ENCODE measurements at regions of chr12 and their contacts with region 1.

Region 1: DNA sequence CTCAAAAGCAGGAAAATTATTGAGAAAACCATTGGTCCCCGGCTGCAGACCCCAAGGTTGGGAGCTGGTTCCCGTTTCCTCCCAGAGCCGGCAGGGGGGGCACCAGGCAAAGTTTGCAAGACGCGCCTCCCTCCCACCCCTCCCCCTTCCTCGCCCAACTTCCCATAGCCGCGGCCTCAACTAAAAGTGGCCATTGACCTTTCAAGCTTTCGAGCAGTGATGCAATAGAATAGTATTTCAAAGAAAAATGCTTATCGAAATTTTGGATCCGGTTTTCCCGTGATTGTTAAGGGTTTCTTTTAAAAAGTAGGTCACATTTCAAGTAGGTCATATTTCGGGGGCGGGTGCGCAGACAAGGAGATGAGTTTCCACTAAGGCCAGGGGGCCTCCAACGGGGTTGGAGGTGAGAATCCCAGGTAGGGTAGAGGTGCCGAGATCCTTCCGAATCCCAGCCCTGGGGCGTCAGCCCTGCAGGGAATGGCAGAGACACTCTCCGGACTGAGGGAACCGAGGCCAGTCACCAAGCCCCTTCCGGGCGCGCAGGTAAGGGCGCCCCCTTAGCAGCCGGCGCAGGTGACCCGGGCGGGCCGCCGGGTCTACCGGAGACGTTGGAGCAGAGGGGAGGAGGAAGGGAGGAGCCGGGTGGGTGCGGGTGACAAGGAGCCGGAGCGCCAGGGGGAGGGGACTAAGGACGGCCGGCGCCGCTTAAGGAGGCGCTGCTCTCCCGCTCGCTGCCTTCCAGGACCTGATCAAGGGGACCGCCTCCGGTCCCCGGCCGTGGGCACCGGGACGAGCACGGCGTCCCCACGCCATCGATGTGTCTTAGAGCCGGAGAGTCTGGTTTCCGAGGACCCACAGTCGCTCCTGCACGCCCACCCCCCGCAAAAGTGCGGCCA is 2.6 kb upstream of the SOCS2 start:
- DNase-seq: peak; percentile 89 to 96
- ATAC-seq: peak; percentile 91
- H3K4me3 ChIP-seq: peak overlapping the region; percentile 62 to 74
- H3K27ac ChIP-seq: peak overlapping the region in 1 of 2 donors; percentile 71
- H3K4me1 ChIP-seq: no peaks in the 10 kb centered on the region
- H3K27me3 ChIP-seq: no peaks in the 10 kb centered on the region

Region 2: GRCh38 chr12:93484315-93484981 is 85.5 kb before region 1 on chr12:
- intact Hi-C with region 1: no loop called
- DNase-seq: no peak
- ATAC-seq: no peak
- H3K4me3 ChIP-seq: no peak overlapping the region
- H3K27ac ChIP-seq: no peak overlapping the region
- H3K4me1 ChIP-seq: peaks cover 0 to 1% of the 10 kb centered on the region in 2 donors
- H3K27me3 ChIP-seq: no peaks in the 10 kb centered on the region

Region 3: DNA sequence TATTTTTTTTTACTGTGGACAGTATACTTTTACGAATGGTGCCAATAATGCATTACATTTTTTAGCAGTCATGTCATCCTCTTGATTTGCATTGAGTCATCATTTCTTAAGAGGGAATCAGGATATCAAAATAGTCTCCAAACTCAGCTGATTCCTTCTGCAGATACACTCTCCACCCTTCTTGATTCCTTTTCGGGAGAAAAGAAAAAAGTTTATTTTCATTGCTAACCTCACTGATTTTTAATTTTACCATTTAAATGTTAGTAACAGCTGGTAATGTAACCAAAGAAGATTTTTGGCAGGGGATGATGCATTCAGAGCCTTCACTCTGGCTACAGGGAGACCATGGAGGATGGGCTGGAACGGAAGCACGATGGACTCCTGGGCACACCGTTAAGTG is 55.1 kb before region 1 on chr12:
- intact Hi-C with region 1: no loop called
- DNase-seq: no peak
- ATAC-seq: no peak
- H3K4me3 ChIP-seq: no peak overlapping the region
- H3K27ac ChIP-seq: no peak overlapping the region
- H3K4me1 ChIP-seq: no peaks in the 10 kb centered on the region
- H3K27me3 ChIP-seq: no peaks in the 10 kb centered on the region

Region 4: GRCh38 chr12:93580682-93581081 is 10.8 kb after region 1 on chr12:
- intact Hi-C with region 1: no loop called
- DNase-seq: no peak
- ATAC-seq: no peak
- H3K4me3 ChIP-seq: no peak overlapping the region
- H3K27ac ChIP-seq: no peak overlapping the region
- H3K4me1 ChIP-seq: no peaks in the 10 kb centered on the region
- H3K27me3 ChIP-seq: no peaks in the 10 kb centered on the region

Region 5: GRCh38 chr12:93591137-93591868 is 21.4 kb after region 1 on chr12:
- intact Hi-C with region 1: loop called in 1 of 2 experiments (anchors 2 kb)
- DNase-seq: peak; percentile 88 to 90
- ATAC-seq: peak; percentile 94
- H3K4me3 ChIP-seq: peak overlapping the region; percentile 54 to 88
- H3K27ac ChIP-seq: peak overlapping the region in 1 of 2 donors; percentile 79
- H3K4me1 ChIP-seq: peaks cover 0 to 3% of the 10 kb centered on the region in 2 donors
- H3K27me3 ChIP-seq: no peaks in the 10 kb centered on the region

Region 6: GRCh38 chr12:93742110-93742934 is 172.4 kb after region 1 on chr12:
- intact Hi-C with region 1: loop called (anchors 1 to 2 kb)
- DNase-seq: peak; percentile 84 to 91
- ATAC-seq: peak; percentile 92
- H3K4me3 ChIP-seq: peak overlapping the region; percentile 64 to 95
- H3K27ac ChIP-seq: peak overlapping the region; percentile 46 to 98
- H3K4me1 ChIP-seq: peaks cover 4 to 6% of the 10 kb centered on the region in 2 donors
- H3K27me3 ChIP-seq: no peaks in the 10 kb centered on the region

Region 7: DNA sequence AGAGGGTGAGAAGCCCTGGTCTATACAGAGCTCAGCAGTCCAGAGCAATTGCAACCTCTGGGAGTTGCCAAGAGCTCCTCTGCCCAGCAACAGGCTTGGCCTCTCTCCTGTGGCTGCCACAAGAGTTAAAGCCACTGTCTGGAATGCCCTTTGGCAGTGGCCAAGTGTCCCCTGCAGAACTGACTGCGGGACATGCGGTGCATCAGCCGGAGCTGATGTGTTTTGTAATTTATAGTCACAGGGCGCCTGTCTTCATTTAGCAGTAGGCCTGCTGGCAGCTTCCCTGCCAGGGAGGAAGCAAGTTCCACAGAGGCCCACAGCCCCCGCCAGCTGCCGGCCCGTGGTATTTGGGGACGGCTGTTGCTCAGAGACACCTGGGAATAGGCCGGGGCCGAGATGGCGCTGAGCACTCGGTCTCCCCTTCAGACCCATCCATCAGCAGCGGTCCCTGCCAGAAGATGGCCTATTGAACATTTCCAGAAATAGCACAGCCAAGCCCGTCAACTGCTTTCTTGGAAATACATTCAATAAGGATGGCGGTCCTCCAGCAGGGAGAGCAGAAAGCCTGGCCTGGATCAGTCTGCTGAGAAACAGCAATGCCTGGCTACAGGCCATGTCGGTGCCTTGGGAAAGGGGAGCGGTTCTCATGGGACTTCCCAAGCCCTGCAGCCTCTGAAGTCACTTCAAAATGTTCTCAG is 324.6 kb after region 1 on chr12:
- intact Hi-C with region 1: loop called in 1 of 2 experiments (anchors 5 kb)
- DNase-seq: peak; percentile 91
- ATAC-seq: peak; percentile 90
- H3K4me3 ChIP-seq: no peak overlapping the region
- H3K27ac ChIP-seq: peak overlapping the region; percentile 38 to 95
- H3K4me1 ChIP-seq: no peaks in the 10 kb centered on the region
- H3K27me3 ChIP-seq: no peaks in the 10 kb centered on the region

Region 8: GRCh38 chr12:94074980-94075928 is 505.4 kb after region 1 on chr12:
- intact Hi-C with region 1: loop called in 1 of 2 experiments (anchors 1 kb)
- DNase-seq: peak; percentile 80 to 83
- ATAC-seq: peak; percentile 94
- H3K4me3 ChIP-seq: peak overlapping the region in 1 of 2 donors; percentile 54
- H3K27ac ChIP-seq: peak overlapping the region; percentile 96 to 99
- H3K4me1 ChIP-seq: peaks cover 0 to 8% of the 10 kb centered on the region in 2 donors
- H3K27me3 ChIP-seq: no peaks in the 10 kb centered on the region

Measured in aorta (tissue), 5 donors.